ENCODE measurements at regions of chr4 and their contacts with region 1.

Region 1: DNA sequence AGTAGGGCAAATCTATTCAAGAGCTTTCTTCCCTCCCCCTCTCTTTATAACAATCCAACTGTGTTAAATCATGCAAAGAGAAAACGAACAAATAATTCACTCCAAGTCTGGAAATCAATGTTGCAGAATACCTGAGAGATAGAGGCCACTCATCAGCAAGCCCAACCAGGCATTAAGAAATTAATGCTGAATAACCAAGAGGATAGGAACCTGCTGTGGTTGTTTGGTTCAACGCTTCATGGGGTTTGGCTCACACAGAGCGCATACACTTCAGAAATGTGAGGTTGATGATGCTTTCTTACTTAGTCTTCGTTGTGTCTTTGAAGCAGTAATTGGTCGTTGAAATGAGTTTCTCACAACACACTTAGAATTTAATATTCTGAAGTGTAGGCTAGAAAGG is 1540.0 kb upstream of the PABPC4L start:
- DNase-seq: no peak
- H3K4me3 ChIP-seq: no peak overlapping the region
- H3K27ac ChIP-seq: no peak overlapping the region
- H3K4me1 ChIP-seq: no peaks in the 10 kb centered on the region
- H3K27me3 ChIP-seq: no peaks in the 10 kb centered on the region
- CTCF ChIP-seq: no peak
- POLR2A ChIP-seq: no peak

Region 2: DNA sequence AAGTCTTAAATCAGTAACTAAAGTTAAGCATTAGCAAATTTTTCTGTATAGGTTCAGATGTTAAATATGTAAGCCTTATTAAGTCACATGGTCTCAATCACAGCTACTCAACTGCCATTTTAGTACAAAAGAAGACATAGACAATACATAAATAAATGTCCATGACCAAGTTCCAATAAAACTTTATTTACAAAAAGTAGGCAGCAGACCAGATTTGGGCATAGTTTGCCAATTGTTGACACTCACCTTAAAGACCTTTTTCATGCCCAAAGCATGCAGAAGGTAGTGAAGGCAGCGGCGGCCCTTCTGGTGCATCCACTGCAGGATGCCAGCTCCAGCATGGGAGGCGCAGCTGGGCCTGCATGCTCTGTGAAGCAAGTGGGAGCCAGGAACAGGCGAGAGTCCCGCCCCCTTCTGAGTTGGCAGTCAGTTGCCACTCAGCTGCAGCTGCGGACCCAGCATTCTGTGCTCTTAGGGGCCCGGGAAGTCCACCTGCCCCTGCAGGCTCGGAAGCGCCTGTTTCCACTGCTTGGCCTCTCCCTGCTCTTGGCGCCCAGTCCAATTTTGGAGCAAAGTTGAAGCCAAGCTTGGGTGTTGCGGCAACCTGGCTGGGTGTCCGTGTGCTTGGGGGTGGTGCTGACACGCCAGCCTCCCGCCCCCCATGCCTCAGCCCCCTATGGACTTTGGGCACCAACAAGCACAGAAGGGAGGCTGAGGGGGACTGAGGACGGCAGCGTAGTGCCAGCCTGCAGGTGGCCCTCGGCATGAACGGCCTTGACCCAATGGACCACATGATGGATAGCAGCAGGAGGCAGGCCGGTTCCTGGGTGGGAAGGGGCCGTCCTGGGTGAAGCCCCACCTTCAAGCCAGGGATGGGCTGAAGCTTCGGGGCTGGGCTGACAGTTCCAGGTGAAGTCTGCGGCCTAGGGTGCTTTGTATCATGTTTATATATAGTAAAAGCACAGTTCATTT is 1497.6 kb before region 1 on chr4:
- intact Hi-C with region 1: no loop called
- DNase-seq: no peak
- H3K4me3 ChIP-seq: no peak overlapping the region
- H3K27ac ChIP-seq: no peak overlapping the region
- H3K4me1 ChIP-seq: no peaks in the 10 kb centered on the region
- H3K27me3 ChIP-seq: no peaks in the 10 kb centered on the region
- CTCF ChIP-seq: no peak
- POLR2A ChIP-seq: no peak

Region 3: GRCh38 chr4:135508005-135508714 is 233.4 kb before region 1 on chr4:
- intact Hi-C with region 1: no loop called
- DNase-seq: no peak
- H3K4me3 ChIP-seq: no peak overlapping the region
- H3K27ac ChIP-seq: no peak overlapping the region
- H3K4me1 ChIP-seq: no peaks in the 10 kb centered on the region
- H3K27me3 ChIP-seq: no peaks in the 10 kb centered on the region
- CTCF ChIP-seq: no peak
- POLR2A ChIP-seq: no peak

Region 4: DNA sequence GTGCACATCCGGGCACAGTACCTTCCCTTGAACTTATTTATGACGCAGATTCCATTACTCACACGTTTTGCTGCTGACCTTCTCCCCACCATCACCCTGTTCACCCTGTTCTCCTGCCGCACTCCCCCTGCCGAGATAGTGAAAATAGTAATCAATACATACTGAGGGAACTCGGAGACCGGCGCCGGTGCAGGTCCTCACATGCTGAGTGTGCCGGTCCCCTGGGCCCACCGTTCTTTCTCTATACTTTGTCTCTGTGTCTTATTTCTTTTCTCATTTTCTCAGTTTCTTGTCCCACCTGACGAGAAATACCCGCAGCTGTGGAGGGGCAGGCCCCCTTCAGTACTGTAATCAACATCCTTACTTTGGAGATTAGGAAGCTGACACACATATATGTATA is 202.9 kb before region 1 on chr4:
- intact Hi-C with region 1: loop called (anchors 5 kb)
- DNase-seq: no peak
- H3K4me3 ChIP-seq: no peak overlapping the region
- H3K27ac ChIP-seq: no peak overlapping the region
- H3K4me1 ChIP-seq: no peaks in the 10 kb centered on the region
- H3K27me3 ChIP-seq: no peaks in the 10 kb centered on the region
- CTCF ChIP-seq: no peak
- POLR2A ChIP-seq: no peak

Region 5: GRCh38 chr4:135804785-135805184 is 63.2 kb after region 1 on chr4:
- intact Hi-C with region 1: no loop called
- DNase-seq: no peak
- H3K4me3 ChIP-seq: no peak overlapping the region
- H3K27ac ChIP-seq: no peak overlapping the region
- H3K4me1 ChIP-seq: no peaks in the 10 kb centered on the region
- H3K27me3 ChIP-seq: no peaks in the 10 kb centered on the region
- CTCF ChIP-seq: no peak
- POLR2A ChIP-seq: no peak